PC-3 (cell line): ENCODE measurements at regions of chr6 and their contacts with region 1.

Region 1: DNA sequence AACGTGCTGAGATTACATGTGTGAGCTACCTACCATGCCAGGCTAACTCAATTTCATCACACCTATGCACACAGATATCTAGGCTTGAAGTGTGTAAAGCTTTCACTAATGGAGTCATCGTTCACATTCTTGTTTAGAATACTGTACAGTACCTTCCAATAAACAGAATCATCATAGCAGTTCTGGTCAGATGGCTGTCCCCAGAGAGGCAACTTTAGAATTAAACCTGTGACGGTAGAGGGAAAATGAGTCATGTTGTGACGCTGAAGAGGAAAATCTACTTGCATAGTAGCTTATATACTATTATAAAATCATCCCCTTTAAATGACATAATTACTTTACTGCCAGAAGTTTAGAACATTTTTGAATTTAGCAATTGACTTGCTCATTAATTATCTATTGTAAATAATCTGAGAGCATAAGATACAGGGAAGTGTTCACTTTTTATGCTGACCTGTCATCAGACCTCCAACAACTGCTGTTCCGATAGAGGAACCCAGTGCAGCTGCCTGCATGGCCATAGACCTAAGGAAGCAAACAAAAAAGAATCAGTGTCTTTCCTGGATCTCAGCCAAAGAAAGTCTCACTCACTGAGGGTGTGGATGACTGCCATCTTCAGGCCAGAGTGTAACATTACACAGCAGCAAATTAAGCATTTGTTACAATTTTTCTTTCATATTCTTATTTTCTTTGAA is 29.8 kb downstream of the RHAG start:
- DNase-seq: peak; percentile 93
- ATAC-seq: peak; percentile 87
- H3K4me3 ChIP-seq: peak overlapping the region; percentile 22; the same call in 1 of the 2 replicates
- H3K27ac ChIP-seq: peak overlapping the region; percentile 16; the same call in 1 of the 2 replicates
- H3K4me1 ChIP-seq: 0 out of 2 replicates have a peak, but pooled peaks cover 9% of the 10 kb centered on the region
- H3K27me3 ChIP-seq: no peaks in the 10 kb centered on the region
- CTCF ChIP-seq: peak; percentile 96

Region 2: GRCh38 chr6:49269190-49269589 is 337.7 kb before region 1 on chr6:
- CTCF ChIA-PET with region 1: no interaction called
- POLR2A ChIA-PET with region 1: no interaction called
- intact Hi-C with region 1: no loop called
- DNase-seq: peak; percentile 72
- ATAC-seq: peak; percentile 94
- H3K4me3 ChIP-seq: no peak overlapping the region
- H3K27ac ChIP-seq: no peak overlapping the region
- H3K4me1 ChIP-seq: peaks cover 7% of the 10 kb centered on the region
- H3K27me3 ChIP-seq: no peaks in the 10 kb centered on the region
- CTCF ChIP-seq: no peak

Region 3: DNA sequence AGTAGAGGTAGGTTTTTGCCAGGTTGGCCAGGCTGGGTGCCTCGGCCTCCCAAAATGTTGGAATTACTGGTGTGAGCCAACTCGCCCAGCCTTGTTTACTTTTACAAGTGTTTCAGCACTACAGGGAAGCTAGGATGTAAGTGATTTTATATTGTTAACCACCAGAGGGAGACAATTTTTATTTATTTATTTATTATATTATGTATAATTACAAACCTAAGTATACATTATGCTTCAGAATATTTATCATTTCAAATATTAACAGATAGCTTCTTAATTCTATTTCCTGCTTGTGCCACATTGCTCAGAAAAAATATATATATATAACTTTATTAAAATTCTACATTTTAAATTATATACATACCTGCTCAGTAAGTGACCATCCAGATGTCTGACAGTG is 153.6 kb before region 1 on chr6:
- CTCF ChIA-PET with region 1: no interaction called
- POLR2A ChIA-PET with region 1: no interaction called
- intact Hi-C with region 1: loop called (anchors 5 kb)
- DNase-seq: peak; percentile 55
- ATAC-seq: no peak; the same call in 1 of the 2 replicates
- H3K4me3 ChIP-seq: no peak overlapping the region
- H3K27ac ChIP-seq: no peak overlapping the region
- H3K4me1 ChIP-seq: no peaks in the 10 kb centered on the region
- H3K27me3 ChIP-seq: no peaks in the 10 kb centered on the region
- CTCF ChIP-seq: no peak; the same call in 1 of the 2 replicates

Region 4: DNA sequence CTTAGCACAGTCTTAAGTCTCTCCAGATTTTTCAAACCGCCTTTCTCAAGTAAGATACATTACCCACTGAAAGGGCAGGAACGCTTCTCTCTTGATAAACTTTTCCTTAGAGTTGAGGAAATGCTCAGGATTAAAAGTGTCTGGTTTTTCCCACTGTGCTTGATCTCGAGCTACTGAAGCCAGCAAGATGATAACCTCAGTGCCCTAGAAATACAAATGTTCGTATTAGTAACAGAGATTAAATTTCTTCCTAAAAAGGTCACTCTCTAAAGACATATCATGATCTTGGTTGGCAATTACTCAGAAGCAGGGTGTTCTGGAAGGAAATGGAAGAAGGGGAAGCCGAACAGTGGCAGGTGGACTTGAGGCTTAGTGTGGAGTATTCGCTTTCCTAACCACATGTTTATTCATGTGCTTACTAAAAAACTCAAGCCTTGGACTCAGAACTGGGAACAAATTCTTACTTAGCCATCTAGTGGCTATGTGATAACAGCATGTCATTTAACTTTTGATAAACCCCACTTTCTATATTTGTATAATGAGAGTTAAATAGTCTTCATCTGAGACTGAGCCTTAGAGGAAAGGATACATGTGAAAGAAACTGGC is 36.3 kb before region 1 on chr6:
- CTCF ChIA-PET with region 1: interaction called, 5 read pairs
- POLR2A ChIA-PET with region 1: no interaction called
- intact Hi-C with region 1: loop called (anchors 2 kb)
- DNase-seq: peak; percentile 66
- ATAC-seq: peak; percentile 51
- H3K4me3 ChIP-seq: no peak overlapping the region
- H3K27ac ChIP-seq: no peak overlapping the region
- H3K4me1 ChIP-seq: peaks cover 17% of the 10 kb centered on the region
- H3K27me3 ChIP-seq: no peaks in the 10 kb centered on the region
- CTCF ChIP-seq: peak; percentile 69

Region 5: GRCh38 chr6:49636713-49637349 is 30.0 kb after region 1 on chr6 and contains the start of gene RHAG:
- CTCF ChIA-PET with region 1: no interaction called
- POLR2A ChIA-PET with region 1: no interaction called
- intact Hi-C with region 1: no loop called
- DNase-seq: no peak
- ATAC-seq: no peak
- H3K4me3 ChIP-seq: no peak within 1 kb of the TSS
- H3K27ac ChIP-seq: no peak within 1 kb of the TSS
- H3K4me1 ChIP-seq: peaks cover 33% of the 10 kb centered on the region
- H3K27me3 ChIP-seq: no peaks in the 10 kb centered on the region
- CTCF ChIP-seq: no peak
- total RNA-seq, gene RHAG: not detected in 2 replicates